Activated CD4-positive, alpha-beta T cell treated with anti-CD3 and anti-CD28 coated beads, Interleukin-2, amount 10 ng/mL, durations not matched to agents 24 days and 14 days (primary cell): ENCODE measurements at regions of chr1 and their contacts with region 1.

Region 1: DNA sequence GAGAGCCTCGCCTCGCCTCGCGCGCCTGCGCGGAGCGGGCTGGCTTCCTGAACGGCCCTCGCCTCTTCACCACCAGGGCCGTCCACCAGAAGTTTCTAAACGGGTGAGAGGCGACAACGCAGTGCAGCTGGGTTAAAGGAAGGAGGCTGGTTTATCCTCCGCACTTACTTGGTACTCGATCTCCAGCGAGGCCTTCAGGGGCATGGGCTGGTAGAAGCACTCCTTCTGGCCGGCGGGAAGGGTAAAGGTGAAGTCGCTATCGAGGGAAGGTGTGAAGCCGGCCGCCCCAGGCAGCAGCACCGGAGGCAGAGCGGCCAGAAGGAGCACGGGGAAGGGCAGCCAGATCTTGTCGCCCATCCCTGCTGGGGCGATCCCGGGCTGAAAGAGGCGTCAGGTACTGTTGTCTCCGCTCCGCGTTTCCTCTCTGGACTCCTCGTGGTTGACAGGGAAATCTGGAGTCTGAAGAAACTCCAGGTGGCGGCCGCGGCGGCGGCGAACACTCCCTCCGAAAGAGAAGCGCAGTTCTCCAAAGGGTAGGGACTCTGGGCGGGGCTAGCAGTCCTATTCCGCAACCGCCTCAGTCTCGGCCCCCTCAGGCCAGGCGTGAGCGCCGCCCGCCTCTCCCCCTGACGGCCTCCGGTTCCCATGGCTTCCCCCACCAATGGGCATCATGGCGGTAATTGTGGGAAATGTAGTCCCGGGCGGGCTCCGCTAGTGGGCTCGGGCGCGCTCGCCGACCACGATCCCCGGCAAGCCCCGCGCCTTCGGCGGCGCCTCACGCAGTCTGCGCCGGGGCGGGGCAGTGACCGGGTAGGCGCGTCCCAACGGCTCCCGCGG is at the start of gene TMED5:
- DNase-seq: peak; percentile 99
- H3K4me3 Mint-ChIP-seq: peak within 1 kb of the TSS; percentile 95
- H3K27ac Mint-ChIP-seq: peak within 1 kb of the TSS; percentile 100
- H3K4me1 Mint-ChIP-seq: peaks cover 42% of the 10 kb centered on the region
- H3K27me3 Mint-ChIP-seq: no peaks in the 10 kb centered on the region
- total RNA-seq, gene TMED5: 43.1 and 44.7 TPM in 2 replicates

Region 2: GRCh38 chr1:93042187-93043056 is 137.7 kb before region 1 on chr1:
- intact Hi-C with region 1: loop called (anchors 1 kb)
- DNase-seq: peak; percentile 88
- H3K4me3 Mint-ChIP-seq: peak overlapping the region; percentile 83
- H3K27ac Mint-ChIP-seq: peak overlapping the region; percentile 88
- H3K4me1 Mint-ChIP-seq: peaks cover 27% of the 10 kb centered on the region
- H3K27me3 Mint-ChIP-seq: no peaks in the 10 kb centered on the region

Region 3: DNA sequence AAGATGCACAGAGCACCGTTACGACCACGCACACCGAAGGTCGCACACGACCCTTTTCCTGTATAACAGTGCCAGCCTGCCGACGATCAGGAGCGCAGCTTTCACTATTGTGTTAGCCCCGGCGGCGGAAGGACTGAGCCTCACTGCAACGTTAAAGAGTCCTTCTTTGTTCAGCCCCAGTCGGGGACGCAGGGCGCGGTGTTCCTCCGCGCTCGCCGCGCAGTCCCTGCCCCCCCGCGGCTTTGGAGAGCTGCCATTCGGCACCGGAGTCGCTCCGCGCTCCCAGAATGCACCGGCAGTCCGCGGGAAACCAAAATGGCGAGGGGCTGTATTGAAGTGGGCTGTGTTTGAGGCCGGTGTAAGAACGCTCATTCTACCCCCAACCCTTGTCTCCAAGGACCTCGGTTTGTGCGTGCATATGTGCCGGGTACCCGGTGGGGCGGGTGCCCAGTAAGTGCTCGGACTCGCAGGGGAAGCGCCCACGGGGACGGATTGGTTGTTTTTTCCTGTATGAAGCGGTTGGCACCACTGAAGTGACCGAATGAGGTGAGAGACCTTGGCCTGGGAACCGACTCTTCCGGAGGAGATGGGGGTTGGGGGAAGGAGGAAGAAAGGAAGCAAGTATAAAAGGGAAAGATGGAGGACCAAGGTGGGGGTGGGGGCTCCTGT is 101.0 kb before region 1 on chr1 and contains the start of gene MTF2:
- intact Hi-C with region 1: loop called (anchors 1 kb)
- DNase-seq: peak; percentile 98
- H3K4me3 Mint-ChIP-seq: peak within 1 kb of the TSS; percentile 99
- H3K27ac Mint-ChIP-seq: peak within 1 kb of the TSS; percentile 94
- H3K4me1 Mint-ChIP-seq: peaks cover 35% of the 10 kb centered on the region
- H3K27me3 Mint-ChIP-seq: no peaks in the 10 kb centered on the region
- total RNA-seq, gene MTF2: 63.7 and 64.3 TPM in 2 replicates

Region 4: GRCh38 chr1:93219443-93219842 is 39.3 kb after region 1 on chr1:
- intact Hi-C with region 1: loop called (anchors 1 kb)
- DNase-seq: peak; percentile 80
- H3K4me3 Mint-ChIP-seq: peak overlapping the region; percentile 78
- H3K27ac Mint-ChIP-seq: peak overlapping the region; percentile 89
- H3K4me1 Mint-ChIP-seq: peaks cover 31% of the 10 kb centered on the region
- H3K27me3 Mint-ChIP-seq: no peaks in the 10 kb centered on the region

Region 5: DNA sequence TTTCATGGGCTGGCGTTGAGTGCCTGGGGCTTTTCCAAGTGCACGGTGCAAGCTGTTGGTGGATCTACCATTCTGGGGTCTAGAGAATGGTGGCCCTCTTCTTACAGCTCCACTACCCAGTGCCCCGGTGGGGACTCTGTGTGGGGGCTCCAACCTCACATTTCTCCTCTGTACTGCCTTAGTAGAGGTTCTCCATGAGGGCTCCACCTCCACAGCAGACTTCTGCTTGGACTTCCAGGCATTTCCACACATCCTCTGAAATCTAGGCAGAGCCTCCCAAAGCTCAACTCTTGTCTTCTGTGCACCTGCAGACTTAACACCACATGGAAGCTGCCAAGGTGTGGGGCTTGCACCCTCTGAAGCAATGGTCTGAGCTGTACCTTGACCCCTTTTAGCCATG is 82.5 kb after region 1 on chr1:
- intact Hi-C with region 1: no loop called
- DNase-seq: no peak
- H3K4me3 Mint-ChIP-seq: no peak overlapping the region
- H3K27ac Mint-ChIP-seq: no peak overlapping the region
- H3K4me1 Mint-ChIP-seq: no peaks in the 10 kb centered on the region
- H3K27me3 Mint-ChIP-seq: no peaks in the 10 kb centered on the region

Region 6: GRCh38 chr1:93878889-93879586 is 698.9 kb after region 1 on chr1 and contains the start of gene DNTTIP2:
- intact Hi-C with region 1: loop called (anchors 10 kb)
- DNase-seq: peak; percentile 97
- H3K4me3 Mint-ChIP-seq: peak within 1 kb of the TSS; percentile 93
- H3K27ac Mint-ChIP-seq: peak within 1 kb of the TSS; percentile 97
- H3K4me1 Mint-ChIP-seq: peaks cover 33% of the 10 kb centered on the region
- H3K27me3 Mint-ChIP-seq: no peaks in the 10 kb centered on the region
- total RNA-seq, gene DNTTIP2: 85.4 and 89.9 TPM in 2 replicates